Activated T-helper 2 cell treated with anti-CD3 and anti-CD28 coated beads, Interferon-gamma antibody, Interleukin-2, Interleukin-4, amounts not matched to agents 10 μg/mL and 5 μg/mL and 100 μg/mL, durations not matched to agents 14 hours and 24 hours and 36 hours (primary cell): ENCODE measurements at regions of chr4 and their contacts with region 1.

Region 1: DNA sequence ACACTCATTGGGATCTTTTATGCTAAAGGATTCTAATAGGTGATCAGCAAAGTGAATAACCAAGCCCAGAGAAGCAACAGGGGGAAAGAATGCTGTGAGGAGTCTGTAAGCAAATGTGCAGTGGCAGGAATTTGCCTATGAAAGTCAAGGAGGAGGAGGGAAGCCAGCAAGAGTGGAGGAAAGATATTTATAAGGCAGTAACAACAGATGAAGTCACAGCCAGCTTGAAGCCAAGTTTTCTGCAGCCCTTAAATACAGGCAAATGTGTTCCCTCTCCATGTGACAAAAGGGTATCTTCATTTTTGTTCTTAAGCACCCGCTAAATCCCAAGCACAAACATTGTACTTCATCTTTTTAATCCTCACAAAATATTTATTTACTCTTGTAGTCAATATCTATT is 275.0 kb upstream of the CLNK start:
- DNase-seq: no peak
- H3K4me3 Mint-ChIP-seq: no peak overlapping the region
- H3K27ac Mint-ChIP-seq: no peak overlapping the region
- H3K4me1 Mint-ChIP-seq: peaks cover 8% of the 10 kb centered on the region
- H3K27me3 Mint-ChIP-seq: peaks cover 13% of the 10 kb centered on the region

Region 2: GRCh38 chr4:10893395-10893794 is 66.2 kb before region 1 on chr4:
- intact Hi-C with region 1: loop called (anchors 10 kb)
- DNase-seq: no peak
- H3K4me3 Mint-ChIP-seq: no peak overlapping the region
- H3K27ac Mint-ChIP-seq: no peak overlapping the region
- H3K4me1 Mint-ChIP-seq: peaks cover 22% of the 10 kb centered on the region
- H3K27me3 Mint-ChIP-seq: peaks cover 4% of the 10 kb centered on the region